ENCODE measurements at regions of chr6 and their contacts with region 1.

Region 1: DNA sequence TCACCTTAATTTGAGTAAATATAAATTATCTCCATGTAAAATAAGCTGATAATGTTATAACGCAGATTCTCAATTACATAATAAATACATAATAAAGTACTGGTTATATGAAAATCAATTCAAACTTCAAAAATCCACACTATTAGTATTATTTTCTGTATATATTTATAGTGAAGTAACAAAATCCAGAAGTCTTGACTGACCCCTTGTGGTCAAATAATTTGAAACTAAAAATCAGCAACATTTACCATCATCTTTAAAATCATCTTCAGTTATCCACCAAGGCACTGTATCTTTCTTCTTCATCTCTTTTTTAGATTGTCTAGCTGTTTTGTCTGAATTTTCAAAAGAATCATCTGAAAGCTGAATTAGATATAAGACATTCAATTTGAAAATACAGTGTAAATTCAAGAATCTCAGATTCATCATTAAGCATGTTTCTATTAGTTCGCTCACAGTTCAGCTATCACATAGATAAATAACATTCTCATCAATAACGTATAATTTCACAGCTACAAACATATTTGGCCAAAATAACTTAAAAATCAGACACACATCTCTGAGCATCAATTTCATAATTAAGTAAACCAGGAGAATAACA is 6.5 kb downstream of the CEP162 start:
- DNase-seq: peak; percentile 47
- ATAC-seq: no peak
- H3K4me3 ChIP-seq: no peak overlapping the region
- H3K4me3 Mint-ChIP-seq: no peak overlapping the region
- H3K27ac ChIP-seq: no peak overlapping the region
- H3K27ac Mint-ChIP-seq: no peak overlapping the region
- H3K4me1 ChIP-seq: no peaks in the 10 kb centered on the region
- H3K4me1 Mint-ChIP-seq: peaks cover 10% of the 10 kb centered on the region
- H3K27me3 ChIP-seq: no peaks in the 10 kb centered on the region
- H3K27me3 Mint-ChIP-seq: no peaks in the 10 kb centered on the region
- CTCF ChIP-seq: peak; percentile 79

Region 2: GRCh38 chr6:83019741-83020140 is 1201.2 kb before region 1 on chr6:
- CTCF ChIA-PET with region 1: no interaction called
- POLR2A ChIA-PET with region 1: no interaction called
- intact Hi-C with region 1: no loop called
- DNase-seq: no peak
- ATAC-seq: no peak
- H3K4me3 ChIP-seq: no peak overlapping the region
- H3K4me3 Mint-ChIP-seq: no peak overlapping the region
- H3K27ac ChIP-seq: no peak overlapping the region
- H3K27ac Mint-ChIP-seq: no peak overlapping the region
- H3K4me1 ChIP-seq: no peaks in the 10 kb centered on the region
- H3K4me1 Mint-ChIP-seq: no peaks in the 10 kb centered on the region
- H3K27me3 ChIP-seq: no peaks in the 10 kb centered on the region
- H3K27me3 Mint-ChIP-seq: no peaks in the 10 kb centered on the region
- CTCF ChIP-seq: no peak

Region 3: DNA sequence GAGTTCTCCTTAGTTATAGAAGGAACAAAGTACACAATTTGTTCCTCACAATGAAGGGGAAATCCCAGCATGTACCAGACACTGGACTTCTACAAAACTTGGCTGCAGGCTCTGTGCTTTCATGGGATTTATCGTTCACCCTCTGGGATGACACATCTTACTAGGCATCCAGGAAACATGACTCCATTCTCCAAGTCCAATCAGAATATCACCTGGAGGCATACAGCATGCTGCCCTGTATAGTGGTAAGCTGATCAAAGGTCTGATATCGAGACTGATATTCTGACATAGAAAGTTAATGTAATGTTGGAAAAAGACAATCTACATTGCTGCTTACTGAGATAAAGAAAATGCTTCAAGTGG is 1021.1 kb before region 1 on chr6:
- CTCF ChIA-PET with region 1: no interaction called
- POLR2A ChIA-PET with region 1: no interaction called
- intact Hi-C with region 1: no loop called
- DNase-seq: no peak
- ATAC-seq: no peak
- H3K4me3 ChIP-seq: no peak overlapping the region
- H3K4me3 Mint-ChIP-seq: no peak overlapping the region
- H3K27ac ChIP-seq: no peak overlapping the region
- H3K27ac Mint-ChIP-seq: no peak overlapping the region
- H3K4me1 ChIP-seq: peaks cover 6 to 10% of the 10 kb centered on the region in 2 donors
- H3K4me1 Mint-ChIP-seq: peaks cover 24% of the 10 kb centered on the region
- H3K27me3 ChIP-seq: no peaks in the 10 kb centered on the region
- H3K27me3 Mint-ChIP-seq: no peaks in the 10 kb centered on the region
- CTCF ChIP-seq: no peak

Region 4: GRCh38 chr6:83221889-83222479 is 998.9 kb before region 1 on chr6:
- CTCF ChIA-PET with region 1: interaction called, 6 read pairs
- POLR2A ChIA-PET with region 1: no interaction called
- intact Hi-C with region 1: loop called (anchors 2 kb)
- DNase-seq: peak; percentile 40
- ATAC-seq: no peak
- H3K4me3 ChIP-seq: no peak overlapping the region
- H3K4me3 Mint-ChIP-seq: no peak overlapping the region
- H3K27ac ChIP-seq: no peak overlapping the region
- H3K27ac Mint-ChIP-seq: no peak overlapping the region
- H3K4me1 ChIP-seq: no peaks in the 10 kb centered on the region
- H3K4me1 Mint-ChIP-seq: no peaks in the 10 kb centered on the region
- H3K27me3 ChIP-seq: peaks cover 0 to 3% (median 0%) of the 10 kb centered on the region in 4 experiments
- H3K27me3 Mint-ChIP-seq: peaks cover 11% of the 10 kb centered on the region
- CTCF ChIP-seq: peak; percentile 68

Region 5: DNA sequence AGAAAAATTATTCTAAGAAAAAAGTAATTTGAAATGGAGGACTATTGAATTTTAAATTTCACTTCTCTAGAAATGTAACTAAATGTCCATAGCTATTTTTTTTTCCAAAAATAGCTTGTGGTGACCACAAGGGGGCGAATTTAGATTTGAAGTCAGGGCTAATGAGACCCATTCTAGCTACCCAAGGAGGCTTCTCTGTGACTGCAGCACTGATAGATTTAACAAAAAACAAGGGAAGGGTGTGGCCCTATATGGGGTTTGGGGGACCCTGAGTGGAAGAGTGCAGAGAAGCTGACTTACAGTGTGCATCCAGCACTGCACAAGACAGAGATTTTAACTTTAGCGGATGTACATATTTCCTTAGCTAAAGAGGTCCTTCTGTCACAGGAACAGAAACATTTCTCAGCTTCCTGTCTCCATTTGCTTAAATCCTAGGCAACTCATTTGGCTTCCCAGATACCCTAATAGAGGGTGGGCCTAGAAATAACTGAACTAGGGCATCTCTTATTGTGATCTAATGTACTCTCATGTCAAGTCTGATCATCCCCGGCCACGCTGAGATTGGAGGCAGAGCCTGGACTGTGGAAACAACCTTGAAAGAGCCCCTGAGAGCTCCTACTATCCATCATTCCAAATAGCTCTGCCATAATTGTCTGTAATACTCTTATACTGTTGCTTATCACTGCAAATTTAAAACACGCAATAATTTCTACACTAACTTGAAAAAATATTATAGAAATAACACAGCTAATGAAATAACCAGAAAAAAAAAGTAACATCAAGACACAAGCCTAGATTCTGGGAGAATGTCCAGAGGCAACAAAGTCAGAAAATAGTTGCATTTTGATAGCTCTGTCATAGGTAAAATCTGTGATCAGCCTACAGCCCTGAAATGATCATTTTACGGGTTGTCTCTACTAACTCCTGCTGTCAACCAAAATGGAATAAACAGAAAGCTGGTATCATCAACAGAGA is 605.6 kb before region 1 on chr6:
- CTCF ChIA-PET with region 1: interaction called, 23 read pairs
- POLR2A ChIA-PET with region 1: no interaction called
- intact Hi-C with region 1: no loop called
- DNase-seq: peak; percentile 33
- ATAC-seq: no peak
- H3K4me3 ChIP-seq: no peak overlapping the region
- H3K4me3 Mint-ChIP-seq: no peak overlapping the region
- H3K27ac ChIP-seq: no peak overlapping the region
- H3K27ac Mint-ChIP-seq: no peak overlapping the region
- H3K4me1 ChIP-seq: no peaks in the 10 kb centered on the region
- H3K4me1 Mint-ChIP-seq: no peaks in the 10 kb centered on the region
- H3K27me3 ChIP-seq: no peaks in the 10 kb centered on the region
- H3K27me3 Mint-ChIP-seq: no peaks in the 10 kb centered on the region
- CTCF ChIP-seq: peak; percentile 69

Region 6: GRCh38 chr6:83884523-83884922 is 336.4 kb before region 1 on chr6:
- CTCF ChIA-PET with region 1: interaction called, 30 read pairs
- POLR2A ChIA-PET with region 1: no interaction called
- intact Hi-C with region 1: loop called (anchors 1 kb)
- DNase-seq: peak; percentile 62
- ATAC-seq: peak; percentile 51
- H3K4me3 ChIP-seq: no peak overlapping the region
- H3K4me3 Mint-ChIP-seq: no peak overlapping the region
- H3K27ac ChIP-seq: no peak overlapping the region
- H3K27ac Mint-ChIP-seq: no peak overlapping the region
- H3K4me1 ChIP-seq: peaks cover 5% of the 10 kb centered on the region in 2 donors
- H3K4me1 Mint-ChIP-seq: peaks cover 43% of the 10 kb centered on the region
- H3K27me3 ChIP-seq: no peaks in the 10 kb centered on the region
- H3K27me3 Mint-ChIP-seq: no peaks in the 10 kb centered on the region
- CTCF ChIP-seq: peak; percentile 86

Measured in B cell (primary cell).